Left cardiac atrium (tissue), 4 donors: ENCODE measurements at regions of chr12 and their contacts with region 1.

Region 1: GRCh38 chr12:106386813-106387535 is 29.4 kb downstream of the POLR3B start:
- DNase-seq: no peak
- ATAC-seq: no peak

Region 2: DNA sequence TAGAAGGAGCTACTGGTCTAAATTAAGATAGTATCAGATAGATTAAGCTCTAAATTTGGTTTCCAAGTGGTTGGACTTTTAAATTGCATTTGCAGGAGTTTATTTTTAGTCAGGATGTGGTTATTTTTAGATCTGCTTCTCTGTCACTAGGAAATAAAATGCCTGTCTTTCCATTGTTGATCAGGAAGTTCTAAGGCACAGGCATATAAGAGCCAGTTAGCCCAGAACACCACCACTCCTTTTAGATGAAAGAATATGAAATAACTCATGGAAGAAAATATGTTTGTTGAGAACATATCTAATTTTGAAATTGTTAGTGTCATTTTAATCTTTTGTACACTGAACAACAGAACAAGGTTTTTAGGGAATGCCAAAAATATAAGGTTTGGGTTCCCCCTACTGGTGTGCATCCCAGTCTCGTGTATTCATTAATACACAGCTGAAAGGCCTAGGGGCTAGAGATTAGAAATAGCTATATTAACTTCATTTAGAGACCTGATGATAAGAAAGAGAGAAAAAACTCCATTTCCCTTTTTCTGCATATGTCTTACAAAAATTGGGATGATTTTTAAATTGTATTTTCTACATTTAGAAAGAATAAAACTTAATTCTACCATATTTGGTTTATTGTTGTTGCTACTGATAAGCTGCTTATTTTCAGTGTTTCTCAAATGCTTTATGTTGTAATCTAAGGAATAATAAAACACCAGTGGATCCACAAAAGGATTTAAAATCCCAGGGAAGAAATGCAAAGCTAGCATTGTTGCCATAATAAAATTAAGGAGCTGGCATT is 454.7 kb after region 1 on chr12:
- intact Hi-C with region 1: loop called in 1 of 2 experiments (anchors 5 kb)
- DNase-seq: no peak
- ATAC-seq: peak; percentile 78 to 85

Region 3: GRCh38 chr12:106919910-106920544 is 533.1 kb after region 1 on chr12:
- intact Hi-C with region 1: loop called (anchors 2 to 5 kb)
- DNase-seq: no peak
- ATAC-seq: peak in 1 of 2 donors; percentile 40

Region 4: DNA sequence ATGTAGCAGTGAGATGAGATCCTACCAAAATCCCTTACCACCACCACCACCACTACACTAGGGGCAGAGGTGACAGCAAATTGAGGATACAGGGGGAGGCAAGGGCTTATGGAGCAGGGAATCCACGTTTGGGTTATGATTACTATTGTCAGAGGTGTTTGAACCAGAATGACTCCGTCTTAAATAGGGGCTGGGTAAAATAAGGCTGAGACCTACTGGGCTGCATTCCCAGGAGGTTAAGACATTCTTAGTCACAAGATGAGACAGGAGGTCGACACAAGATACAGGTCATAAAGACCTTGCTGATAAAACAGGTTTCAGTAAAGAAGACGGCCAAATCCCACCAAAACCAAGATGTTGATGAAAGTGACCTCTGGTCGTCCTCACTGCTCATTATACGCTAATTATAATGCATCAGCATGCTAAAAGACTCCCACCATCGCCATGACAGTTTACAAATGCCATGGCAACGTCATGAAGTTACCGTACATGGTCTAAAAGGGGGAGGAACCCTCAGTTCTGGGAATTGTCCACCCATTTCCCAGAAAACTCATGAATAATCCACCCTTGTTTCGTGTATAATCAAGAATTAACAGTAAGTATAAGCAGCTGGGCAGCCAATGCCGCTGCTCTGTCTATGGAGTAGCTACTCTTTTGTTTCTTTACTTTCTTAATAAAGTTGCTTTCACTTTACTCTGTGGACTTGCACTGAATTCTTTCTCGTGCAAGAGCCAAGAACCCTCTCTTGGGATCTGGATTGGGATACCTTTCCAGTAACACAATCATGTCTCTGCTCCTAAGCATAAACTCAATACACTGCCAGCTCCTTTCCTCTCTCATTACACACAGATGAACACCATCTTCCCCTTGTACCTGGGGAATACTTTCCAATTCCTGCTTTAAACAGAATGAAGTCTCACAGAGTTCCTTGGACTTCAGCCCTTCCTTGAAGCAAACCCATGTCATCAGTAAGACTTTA is 723.1 kb after region 1 on chr12:
- intact Hi-C with region 1: loop called (anchors 10 kb)
- DNase-seq: no peak
- ATAC-seq: peak; percentile 22 to 38